Heart right ventricle (tissue), 16 donors: ENCODE measurements at regions of chr11 and their contacts with region 1.

Region 1: DNA sequence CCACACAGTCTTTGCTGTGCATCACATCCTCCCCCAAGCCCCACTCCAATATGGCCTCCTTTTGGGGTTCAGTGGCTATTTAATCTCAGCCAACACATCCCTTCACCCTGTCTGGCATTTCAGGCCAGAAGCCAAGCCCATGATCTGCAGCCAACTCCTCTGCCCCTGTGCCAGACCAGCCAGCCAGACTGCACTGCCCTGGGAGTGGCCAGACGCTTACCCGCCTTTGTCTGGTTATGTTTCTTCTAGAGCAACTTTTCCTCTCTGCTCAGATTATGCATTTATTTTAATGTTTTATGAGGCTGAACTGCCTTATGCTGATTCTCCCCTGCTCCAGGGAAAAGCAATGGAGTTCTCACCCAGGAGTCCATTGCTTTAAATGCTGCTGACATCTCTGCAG is 206.7 kb upstream of the TBCEL start:
- DNase-seq: peak; percentile 26 to 30
- ATAC-seq: peak; percentile 55 to 88 (median 73)
- H3K4me3 ChIP-seq: no peak overlapping the region
- H3K27ac ChIP-seq: no peak overlapping the region
- H3K4me1 ChIP-seq: peaks cover 0 to 5% (median 0%) of the 10 kb centered on the region in 9 donors
- H3K27me3 ChIP-seq: peaks cover 0 to 45% (median 15%) of the 10 kb centered on the region in 7 donors
- CTCF ChIP-seq: no peak

Region 2: DNA sequence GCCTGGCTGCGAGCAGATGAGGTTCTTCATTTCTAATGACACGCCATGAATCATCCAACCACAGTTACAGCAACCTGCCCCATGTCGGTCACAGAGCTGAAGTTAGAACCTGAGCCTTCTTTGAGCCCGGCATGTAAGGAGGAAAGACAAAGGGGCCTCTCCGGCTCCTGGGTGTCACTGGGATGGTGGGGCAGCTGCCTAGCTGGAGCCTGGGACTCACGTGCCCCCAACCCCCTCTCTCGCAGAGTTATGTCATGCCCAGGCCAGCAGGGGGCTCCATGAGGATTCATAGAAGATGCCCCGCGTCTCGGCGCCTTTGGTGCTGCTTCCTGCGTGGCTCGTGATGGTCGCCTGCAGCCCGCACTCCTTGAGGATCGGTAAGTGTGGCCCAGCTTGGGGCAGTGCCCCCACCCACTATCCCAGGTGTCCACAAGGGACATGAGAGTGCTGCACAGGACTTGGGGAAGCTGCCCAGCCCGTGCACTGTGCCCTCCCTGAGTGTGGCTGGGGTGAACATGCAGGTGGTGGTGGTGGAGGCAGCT is 157.1 kb before region 1 on chr11:
- intact Hi-C with region 1: no loop called
- DNase-seq: no peak
- ATAC-seq: peak in 1 of 8 donors; percentile 33
- H3K4me3 ChIP-seq: no peak overlapping the region
- H3K27ac ChIP-seq: no peak overlapping the region
- H3K4me1 ChIP-seq: no peaks in the 10 kb centered on the region
- H3K27me3 ChIP-seq: peaks cover 0 to 53% (median 26%) of the 10 kb centered on the region in 7 donors
- CTCF ChIP-seq: peak in 7 of 9 donors; percentile 34 to 48 (median 39)

Region 3: DNA sequence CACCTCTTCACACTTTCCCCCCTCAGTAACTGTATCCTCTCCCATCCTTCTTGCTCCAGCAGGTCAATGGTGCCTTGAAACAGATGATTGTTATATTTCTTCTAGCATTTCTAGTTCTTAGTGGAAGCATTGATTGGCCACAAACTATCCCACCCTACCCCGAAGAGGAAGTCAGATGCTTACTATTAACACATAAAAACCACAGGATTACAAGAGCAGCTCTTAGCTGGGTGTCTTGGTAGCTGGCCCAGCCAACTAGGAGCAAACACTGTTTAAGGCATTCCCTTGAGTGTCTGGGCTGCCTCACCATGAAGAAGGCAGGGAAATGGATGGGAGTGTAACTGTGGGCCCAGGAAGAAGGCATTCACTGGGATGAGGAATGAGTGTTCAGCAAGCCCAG is 129.0 kb before region 1 on chr11:
- intact Hi-C with region 1: loop called in 1 of 10 experiments (anchors 5 kb)
- DNase-seq: no peak
- ATAC-seq: no peak
- H3K4me3 ChIP-seq: no peak overlapping the region
- H3K27ac ChIP-seq: no peak overlapping the region
- H3K4me1 ChIP-seq: no peaks in the 10 kb centered on the region
- H3K27me3 ChIP-seq: peaks cover 0 to 56% (median 34%) of the 10 kb centered on the region in 7 donors
- CTCF ChIP-seq: no peak

Region 4: DNA sequence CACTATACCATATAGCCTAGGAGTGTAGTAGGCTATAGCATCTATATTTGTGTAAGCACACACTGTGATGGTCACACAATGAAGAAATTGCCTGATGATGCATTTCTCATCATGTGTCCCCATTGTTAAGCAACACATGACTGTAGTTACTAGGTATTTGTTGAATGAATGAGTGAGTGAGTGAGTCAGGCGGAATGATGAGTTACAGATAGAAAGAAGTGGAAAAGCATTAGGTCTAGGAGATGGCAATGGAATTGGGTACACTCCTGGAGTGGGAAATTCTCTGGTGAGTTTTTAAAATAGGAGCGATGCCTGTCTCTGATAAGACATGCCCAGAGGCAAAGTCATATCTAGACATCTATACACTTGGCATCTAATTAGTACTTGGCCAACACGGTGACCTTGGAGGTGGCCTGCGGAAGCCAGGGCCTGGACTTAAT is 46.2 kb after region 1 on chr11:
- intact Hi-C with region 1: no loop called
- DNase-seq: no peak
- ATAC-seq: no peak
- H3K4me3 ChIP-seq: no peak overlapping the region
- H3K27ac ChIP-seq: no peak overlapping the region
- H3K4me1 ChIP-seq: peaks cover 0 to 12% (median 7%) of the 10 kb centered on the region in 9 donors
- H3K27me3 ChIP-seq: peaks cover 0 to 24% (median 18%) of the 10 kb centered on the region in 7 donors
- CTCF ChIP-seq: no peak